Upper lobe of right lung (tissue), 1 donor: ENCODE measurements at regions of chr18 and their contacts with region 1.

Region 1: GRCh38 chr18:24600076-24600654 is 139.7 kb downstream of the HRH4 start:
- DNase-seq: no peak
- ATAC-seq: no peak
- H3K4me3 ChIP-seq: no peak overlapping the region
- H3K27ac ChIP-seq: no peak overlapping the region
- H3K4me1 ChIP-seq: peaks cover 5% of the 10 kb centered on the region
- H3K27me3 ChIP-seq: no peaks in the 10 kb centered on the region
- CTCF ChIP-seq: peak; percentile 57

Region 2: DNA sequence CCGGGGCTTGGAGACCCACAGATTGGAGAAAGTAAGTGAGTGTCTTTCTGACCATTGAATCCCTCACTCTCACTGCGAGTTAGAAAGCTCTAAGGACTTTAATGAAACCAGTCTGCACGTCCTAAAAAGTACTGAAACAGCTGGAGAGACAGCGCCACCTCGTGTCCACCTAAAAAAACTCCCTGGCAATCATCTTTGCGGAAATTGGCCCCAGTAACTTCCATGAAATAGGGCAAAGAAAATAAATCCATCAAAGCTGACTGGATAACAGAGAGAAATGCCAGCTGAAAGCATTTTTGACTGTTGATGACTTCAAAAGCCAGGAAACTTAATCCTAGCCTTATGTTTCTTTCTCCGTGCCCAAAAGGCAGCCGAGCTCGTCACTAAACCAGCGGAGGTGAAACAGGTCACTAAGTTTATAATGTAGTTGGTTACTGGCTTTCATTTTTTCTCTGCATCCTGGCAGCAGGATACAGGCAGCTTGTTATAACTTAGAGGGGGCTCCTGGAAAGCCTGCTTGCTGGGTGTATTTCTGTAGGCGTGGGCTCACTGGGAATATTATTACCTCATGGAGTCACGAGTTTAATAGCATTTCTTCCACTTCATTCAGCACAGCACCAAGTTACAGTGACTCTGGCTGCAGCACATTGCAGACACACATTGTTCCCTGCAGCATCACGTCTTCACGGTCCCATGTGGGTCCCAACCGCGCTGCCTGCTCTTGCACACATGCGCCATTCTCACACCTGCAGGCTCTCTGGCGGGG is 126.7 kb after region 1 on chr18:
- intact Hi-C with region 1: loop called (anchors 10 kb)
- DNase-seq: no peak
- ATAC-seq: peak; percentile 76
- H3K4me3 ChIP-seq: peak overlapping the region; percentile 4
- H3K27ac ChIP-seq: no peak overlapping the region
- H3K4me1 ChIP-seq: no peaks in the 10 kb centered on the region
- H3K27me3 ChIP-seq: peaks cover 4% of the 10 kb centered on the region
- CTCF ChIP-seq: peak; percentile 77